ENCODE measurements at regions of chr1 and their contacts with region 1.

Region 1: GRCh38 chr1:94045465-94046056 is 75.4 kb downstream of the ABCA4 start:
- DNase-seq: peak; percentile 96

Region 2: GRCh38 chr1:94362466-94363058 is 317.0 kb after region 1 on chr1:
- in situ Hi-C with region 1: loop called (anchors 25 kb)
- DNase-seq: no peak